CD8-positive, alpha-beta memory T cell (primary cell): ENCODE measurements at regions of chr6 and their contacts with region 1.

Region 1: DNA sequence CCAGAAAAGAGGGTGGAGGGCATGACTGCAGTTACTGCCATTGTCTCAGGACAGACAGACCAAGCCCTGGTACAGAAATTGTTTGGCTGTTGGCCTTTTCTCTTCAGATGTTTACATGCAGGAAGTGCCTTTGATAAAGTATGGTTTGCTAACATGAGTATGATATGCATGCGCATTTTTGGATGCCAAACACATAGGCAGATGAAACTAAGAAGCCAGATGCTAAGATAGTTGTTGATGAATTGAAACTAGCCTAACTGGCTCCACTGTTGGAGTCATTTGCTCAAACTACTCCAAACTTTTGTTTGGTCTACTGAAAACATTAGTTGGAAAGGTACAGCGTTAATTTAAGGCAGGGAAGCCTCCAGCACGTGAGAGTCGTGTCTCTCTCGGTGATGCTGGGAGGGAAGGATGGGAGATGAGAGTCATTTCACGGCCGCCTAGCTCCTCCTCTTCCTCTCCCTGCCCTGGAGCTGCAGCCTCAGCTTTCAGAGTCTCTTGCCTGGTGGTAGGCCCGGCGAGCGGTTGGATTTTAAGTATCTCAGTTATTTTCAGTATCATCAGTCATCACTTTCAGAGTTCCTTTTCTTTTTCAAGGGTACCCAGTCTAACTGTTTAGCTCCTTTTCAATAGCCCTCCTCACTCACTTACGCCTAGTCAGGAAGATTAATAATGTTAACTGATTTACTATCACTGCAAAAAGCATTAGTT is 29.7 kb downstream of the RREB1 start:
- DNase-seq: peak; percentile 28 to 66 (median 50)
- H3K4me3 ChIP-seq: peak overlapping the region; percentile 36
- H3K4me3 Mint-ChIP-seq: peak overlapping the region; percentile 71 to 88 (median 77)
- H3K27ac ChIP-seq: peak overlapping the region; percentile 33
- H3K27ac Mint-ChIP-seq: peak overlapping the region; percentile 83 to 97 (median 96)
- H3K4me1 ChIP-seq: peaks cover 77% of the 10 kb centered on the region
- H3K4me1 Mint-ChIP-seq: peaks cover 57 to 88% (median 78%) of the 10 kb centered on the region in 3 donors
- H3K27me3 ChIP-seq: no peaks in the 10 kb centered on the region
- H3K27me3 Mint-ChIP-seq: no peaks in the 10 kb centered on the region

Region 2: GRCh38 chr6:7107578-7108195 is 29.8 kb before region 1 on chr6 and contains the start of gene RREB1:
- CTCF ChIA-PET with region 1: interaction called, 4 read pairs
- POLR2A ChIA-PET with region 1: interaction called, 27 read pairs
- DNase-seq: peak; percentile 46 to 78 (median 59)
- H3K4me3 ChIP-seq: peak within 1 kb of the TSS; percentile 72
- H3K4me3 Mint-ChIP-seq: peak within 1 kb of the TSS; percentile 93 to 98 (median 96)
- H3K27ac ChIP-seq: peak within 1 kb of the TSS; percentile 74
- H3K27ac Mint-ChIP-seq: peak within 1 kb of the TSS; percentile 92 to 97 (median 94)
- H3K4me1 ChIP-seq: peaks cover 30% of the 10 kb centered on the region
- H3K4me1 Mint-ChIP-seq: peaks cover 34 to 43% (median 42%) of the 10 kb centered on the region in 3 donors
- H3K27me3 ChIP-seq: no peaks in the 10 kb centered on the region
- H3K27me3 Mint-ChIP-seq: peaks cover 0 to 1% of the 10 kb centered on the region in 2 donors
- total RNA-seq, gene RREB1: 17.7 to 18.7 TPM

Region 3: DNA sequence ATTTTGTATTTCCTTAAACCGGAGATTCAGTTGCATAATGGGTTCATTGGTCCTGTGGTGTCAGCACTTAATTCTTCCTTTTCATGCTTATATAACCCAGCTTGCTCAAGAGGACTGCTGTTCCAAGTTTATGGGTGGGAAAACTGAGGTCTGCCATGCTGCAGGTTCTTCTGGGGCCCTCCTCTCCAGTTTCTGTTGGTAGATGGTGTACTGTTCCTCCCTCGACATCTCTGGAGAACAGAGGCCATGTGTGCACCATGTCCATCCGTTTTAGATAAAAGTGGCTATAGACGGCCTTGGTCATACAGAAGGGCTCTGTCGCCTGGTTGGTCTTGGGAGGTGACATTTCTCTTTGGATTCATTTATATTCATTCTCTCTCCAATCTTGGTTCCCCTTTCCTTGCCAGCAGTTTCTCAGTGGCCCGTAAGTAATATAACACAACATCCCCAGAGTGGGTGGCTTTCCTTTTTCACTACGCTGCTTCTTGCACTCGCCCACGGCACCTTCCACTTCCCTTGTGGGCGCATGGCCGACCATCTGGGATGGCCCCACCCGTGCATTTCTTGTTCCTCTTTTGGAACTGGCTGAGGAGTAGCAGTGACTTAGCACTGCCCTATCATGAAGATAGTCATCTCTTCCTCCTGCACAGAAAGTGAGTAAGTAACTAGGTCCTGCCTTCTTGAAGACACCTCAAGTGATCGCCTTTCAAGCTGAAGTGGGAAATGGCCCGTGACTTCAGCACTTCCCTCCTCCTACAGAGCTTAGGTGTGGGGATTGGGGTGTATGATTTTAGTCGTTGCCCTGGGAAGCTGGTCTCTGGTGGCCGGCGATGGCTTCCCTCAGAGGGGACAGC is 64.4 kb after region 1 on chr6:
- CTCF ChIA-PET with region 1: no interaction called
- POLR2A ChIA-PET with region 1: no interaction called
- DNase-seq: no peak
- H3K4me3 ChIP-seq: no peak overlapping the region
- H3K4me3 Mint-ChIP-seq: no peak overlapping the region
- H3K27ac ChIP-seq: peak overlapping the region; percentile 70
- H3K27ac Mint-ChIP-seq: peak overlapping the region in 2 of 8 donors; percentile 33 to 84
- H3K4me1 ChIP-seq: peaks cover 4% of the 10 kb centered on the region
- H3K4me1 Mint-ChIP-seq: peaks cover 5 to 36% (median 14%) of the 10 kb centered on the region in 3 donors
- H3K27me3 ChIP-seq: no peaks in the 10 kb centered on the region
- H3K27me3 Mint-ChIP-seq: no peaks in the 10 kb centered on the region